Activated CD4-positive, alpha-beta T cell treated with anti-CD3 and anti-CD28 coated beads, Interleukin-2, amount 10 ng/mL, durations not matched to agents 7 days and 5 days (primary cell): ENCODE measurements at regions of chr12 and their contacts with region 1.

Region 1: GRCh38 chr12:90042920-90043641 is 334.4 kb upstream of the ATP2B1 start:
- DNase-seq: no peak
- H3K4me3 Mint-ChIP-seq: no peak overlapping the region
- H3K27ac Mint-ChIP-seq: no peak overlapping the region
- H3K4me1 Mint-ChIP-seq: peaks cover 7% of the 10 kb centered on the region
- H3K27me3 Mint-ChIP-seq: no peaks in the 10 kb centered on the region

Region 2: GRCh38 chr12:90030726-90031125 is 12.4 kb before region 1 on chr12:
- CTCF ChIA-PET with region 1: interaction called, 11 read pairs
- POLR2A ChIA-PET with region 1: no interaction called
- DNase-seq: no peak
- H3K4me3 Mint-ChIP-seq: no peak overlapping the region
- H3K27ac Mint-ChIP-seq: no peak overlapping the region
- H3K4me1 Mint-ChIP-seq: peaks cover 9% of the 10 kb centered on the region
- H3K27me3 Mint-ChIP-seq: no peaks in the 10 kb centered on the region